Breast epithelium (tissue), 4 donors: ENCODE measurements at regions of chr16 and their contacts with region 1.

Region 1: GRCh38 chr16:8621572-8622314 is at the start of gene METTL22:
- DNase-seq: peak; percentile 78 to 84
- H3K4me3 ChIP-seq: peak within 1 kb of the TSS; percentile 97 to 98 (median 98)
- H3K27ac ChIP-seq: peak within 1 kb of the TSS; percentile 88 to 89
- H3K4me1 ChIP-seq: no peaks in the 10 kb centered on the region
- H3K27me3 ChIP-seq: no peaks in the 10 kb centered on the region
- CTCF ChIP-seq: no peak
- POLR2A ChIP-seq: peak; percentile 76
- total RNA-seq, gene METTL22: 26.9 to 36.1 (median 27.4) TPM

Region 2: DNA sequence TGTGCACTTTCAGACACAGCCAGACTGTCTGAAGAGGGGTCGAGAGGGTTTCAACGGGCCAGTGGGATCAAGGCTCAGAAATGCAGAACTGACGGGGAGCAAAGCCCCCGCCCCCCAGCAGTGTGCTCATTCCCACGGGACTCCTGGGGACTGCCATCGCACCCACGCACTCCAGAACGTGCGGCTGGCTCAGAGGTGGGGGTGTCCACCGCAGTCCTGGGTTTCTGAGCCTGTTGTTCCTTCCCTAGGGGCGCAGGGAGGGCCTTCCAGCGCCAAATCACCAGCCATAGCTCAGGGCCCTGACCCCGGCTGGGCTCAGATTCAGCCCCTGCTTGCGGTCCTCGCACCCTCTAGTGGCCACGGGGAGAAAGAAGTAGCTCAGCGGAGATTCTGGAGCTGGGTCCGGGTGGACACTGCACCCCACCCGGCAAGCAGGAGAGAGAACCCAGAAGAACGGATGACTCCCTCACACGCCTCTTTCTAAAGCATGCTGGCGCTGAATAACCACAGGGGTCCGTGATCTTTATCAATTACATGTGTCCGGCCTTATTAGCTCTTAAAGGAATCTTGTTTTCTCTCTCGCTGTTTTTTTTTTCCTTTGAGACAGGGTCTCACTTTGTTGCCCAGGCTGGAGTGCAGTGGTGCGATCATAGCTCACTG is 387.0 kb after region 1 on chr16:
- intact Hi-C with region 1: loop called (anchors 2 kb)
- DNase-seq: peak; percentile 40 to 69
- H3K4me3 ChIP-seq: peak overlapping the region; percentile 15 to 61 (median 37)
- H3K27ac ChIP-seq: peak overlapping the region in 1 of 2 donors; percentile 3
- H3K4me1 ChIP-seq: no peaks in the 10 kb centered on the region
- H3K27me3 ChIP-seq: no peaks in the 10 kb centered on the region
- CTCF ChIP-seq: peak; percentile 55 to 80 (median 74)
- POLR2A ChIP-seq: no peak